ENCODE measurements at regions of chr3 and their contacts with region 1.

Region 1: GRCh38 chr3:143001369-143002082 is at the start of gene U2SURP:
- DNase-seq: peak; percentile 94 to 98 (median 98)
- H3K4me3 ChIP-seq: peak within 1 kb of the TSS; percentile 59 to 100 (median 95)
- H3K27ac ChIP-seq: peak within 1 kb of the TSS; percentile 70 to 97 (median 90)
- H3K27me3 ChIP-seq: peaks cover 0 to 2% (median 0%) of the 10 kb centered on the region in 45 donors
- CTCF ChIP-seq: peak in 43 of 56 donors; percentile 10 to 70 (median 37)
- total RNA-seq, gene U2SURP: 60.5 to 131 (median 95.1) TPM

Region 2: GRCh38 chr3:142447852-142448823 is 553.4 kb before region 1 on chr3 and contains the start of gene XRN1:
- intact Hi-C with region 1: loop called in 1 of 2 experiments (anchors 5 kb)
- DNase-seq: peak; percentile 82 to 95 (median 91)
- H3K4me3 ChIP-seq: peak within 1 kb of the TSS; percentile 74 to 100 (median 94)
- H3K27ac ChIP-seq: peak within 1 kb of the TSS; percentile 35 to 97 (median 91)
- H3K27me3 ChIP-seq: no peaks in the 10 kb centered on the region
- CTCF ChIP-seq: peak in 27 of 56 donors; percentile 6 to 42 (median 20)
- total RNA-seq, gene XRN1: 27.4 to 83.1 (median 53.9) TPM

Region 3: GRCh38 chr3:142586803-142587406 is 414.6 kb before region 1 on chr3:
- intact Hi-C with region 1: loop called in 1 of 2 experiments (anchors 2 kb)
- DNase-seq: peak in 2 of 10 donors; percentile 16 to 46
- H3K4me3 ChIP-seq: no peak overlapping the region
- H3K27ac ChIP-seq: no peak overlapping the region
- H3K27me3 ChIP-seq: peaks cover 0 to 5% (median 0%) of the 10 kb centered on the region in 45 donors
- CTCF ChIP-seq: peak; percentile 29 to 78 (median 61)

Region 4: GRCh38 chr3:142940483-142940882 is 61.0 kb before region 1 on chr3:
- intact Hi-C with region 1: no loop called
- DNase-seq: no peak
- H3K4me3 ChIP-seq: no peak overlapping the region
- H3K27ac ChIP-seq: no peak overlapping the region
- H3K27me3 ChIP-seq: peaks cover 0 to 4% (median 0%) of the 10 kb centered on the region in 45 donors
- CTCF ChIP-seq: no peak

Region 5: GRCh38 chr3:142952272-142953193 is 49.0 kb before region 1 on chr3:
- intact Hi-C with region 1: no loop called
- DNase-seq: no peak
- H3K4me3 ChIP-seq: no peak overlapping the region
- H3K27ac ChIP-seq: no peak overlapping the region
- H3K27me3 ChIP-seq: peaks cover 0 to 14% (median under 1%) of the 10 kb centered on the region in 45 donors
- CTCF ChIP-seq: no peak

Region 6: GRCh38 chr3:143016321-143016972 is 14.9 kb after region 1 on chr3:
- intact Hi-C with region 1: no loop called
- DNase-seq: no peak
- H3K4me3 ChIP-seq: no peak overlapping the region
- H3K27ac ChIP-seq: no peak overlapping the region
- H3K27me3 ChIP-seq: no peaks in the 10 kb centered on the region
- CTCF ChIP-seq: peak; percentile 34 to 75 (median 58)

Region 7: GRCh38 chr3:143056372-143056771 is 54.8 kb after region 1 on chr3:
- intact Hi-C with region 1: no loop called
- DNase-seq: no peak
- H3K4me3 ChIP-seq: no peak overlapping the region
- H3K27ac ChIP-seq: no peak overlapping the region
- H3K27me3 ChIP-seq: no peaks in the 10 kb centered on the region
- CTCF ChIP-seq: no peak